ENCODE measurements at regions of chr7 and their contacts with region 1.

Region 1: GRCh38 chr7:150974468-150975391 is 3.4 kb downstream of the KCNH2 start:
- DNase-seq: peak; percentile 25
- ATAC-seq: peak; percentile 7
- H3K4me3 ChIP-seq: peak overlapping the region; percentile 25
- H3K27ac ChIP-seq: no peak overlapping the region
- H3K4me1 ChIP-seq: peaks cover 31% of the 10 kb centered on the region; the same call in 1 of the 2 replicates
- H3K27me3 ChIP-seq: peaks cover 43% of the 10 kb centered on the region
- CTCF ChIP-seq: 0 out of 2 replicates have a peak, but pooled peaks have one; percentile 26
- POLR2A ChIP-seq: no peak
- RAD21 ChIP-seq: no peak

Region 2: GRCh38 chr7:150688630-150689029 is 286.1 kb before region 1 on chr7:
- CTCF ChIA-PET with region 1: no interaction called
- POLR2A ChIA-PET with region 1: no interaction called
- dilution Hi-C with region 1: no loop called
- in situ Hi-C with region 1: no loop called
- intact Hi-C with region 1: no loop called
- DNase-seq: no peak
- ATAC-seq: no peak
- H3K4me3 ChIP-seq: no peak overlapping the region
- H3K27ac ChIP-seq: no peak overlapping the region
- H3K4me1 ChIP-seq: no peaks in the 10 kb centered on the region; the same call in 1 of the 2 replicates
- H3K27me3 ChIP-seq: no peaks in the 10 kb centered on the region
- CTCF ChIP-seq: no peak
- POLR2A ChIP-seq: no peak
- RAD21 ChIP-seq: no peak

Region 3: DNA sequence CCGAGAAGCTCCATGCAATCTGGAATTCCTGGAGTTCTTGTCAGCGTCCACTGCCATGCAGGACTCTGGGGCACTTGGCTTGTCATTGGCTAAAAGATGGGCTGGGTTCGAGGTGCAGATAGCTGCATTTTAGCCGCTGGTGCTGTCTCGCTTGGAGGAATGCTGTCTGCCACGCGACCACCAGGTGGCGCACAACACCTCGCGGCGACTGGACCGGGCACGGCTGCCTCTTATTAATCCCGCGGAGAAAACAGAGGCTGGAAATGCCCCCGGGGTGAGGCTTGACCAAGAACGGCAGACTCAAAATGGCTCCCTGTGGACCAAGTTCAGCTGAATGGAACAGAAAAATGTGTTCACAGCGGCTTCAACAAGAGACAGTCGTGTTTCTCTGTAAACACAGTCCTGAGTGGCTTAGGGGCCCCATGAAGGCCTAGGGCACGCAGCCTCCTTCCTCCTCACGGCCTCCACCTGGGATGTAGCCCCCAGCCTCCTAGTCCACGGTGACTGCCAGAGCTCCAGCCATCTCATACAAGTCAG is 76.2 kb before region 1 on chr7:
- CTCF ChIA-PET with region 1: no interaction called
- POLR2A ChIA-PET with region 1: no interaction called
- dilution Hi-C with region 1: no loop called
- in situ Hi-C with region 1: no loop called
- intact Hi-C with region 1: loop called (anchors 2 kb)
- DNase-seq: peak; percentile 48
- ATAC-seq: peak; percentile 86
- H3K4me3 ChIP-seq: no peak overlapping the region
- H3K27ac ChIP-seq: no peak overlapping the region
- H3K4me1 ChIP-seq: peaks cover 6% of the 10 kb centered on the region; the same call in 1 of the 2 replicates
- H3K27me3 ChIP-seq: peaks cover 15% of the 10 kb centered on the region; the same call in 1 of the 2 replicates
- CTCF ChIP-seq: peak; percentile 91
- POLR2A ChIP-seq: no peak
- RAD21 ChIP-seq: peak; percentile 83

Measured in IMR-90 (cell line).